ENCODE measurements at regions of chr11 and their contacts with region 1.

Region 1: GRCh38 chr11:40183073-40184064 is 1276.1 kb downstream of the LRRC4C start:
- DNase-seq: peak; percentile 78
- ATAC-seq: peak; percentile 98
- H3K4me3 ChIP-seq: no peak overlapping the region
- H3K27ac ChIP-seq: peak overlapping the region; percentile 26; the same call in 1 of the 2 replicates
- H3K4me1 ChIP-seq: no peaks in the 10 kb centered on the region; the same call in 1 of the 2 replicates
- H3K27me3 ChIP-seq: no peaks in the 10 kb centered on the region
- CTCF ChIP-seq: no peak
- EP300 ChIP-seq: peak; percentile 83 to 92; a peak in 3 of 4 replicates
- POLR2A ChIP-seq: no peak
- RAD21 ChIP-seq: no peak

Region 2: GRCh38 chr11:40168461-40168860 is 14.9 kb before region 1 on chr11:
- CTCF ChIA-PET with region 1: interaction called, 15 read pairs
- POLR2A ChIA-PET with region 1: interaction called, 4 read pairs
- RAD21 ChIA-PET with region 1: interaction called, 21 read pairs
- SMC1A ChIA-PET with region 1: interaction called, 54 read pairs
- in situ Hi-C with region 1: no loop called
- intact Hi-C with region 1: loop called (anchors 1 kb)
- DNase-seq: peak; percentile 72
- ATAC-seq: peak; percentile 97
- H3K4me3 ChIP-seq: no peak overlapping the region
- H3K27ac ChIP-seq: no peak overlapping the region
- H3K4me1 ChIP-seq: no peaks in the 10 kb centered on the region
- H3K27me3 ChIP-seq: no peaks in the 10 kb centered on the region
- CTCF ChIP-seq: no peak
- EP300 ChIP-seq: peak; percentile 73 to 92; a peak in 3 of 4 replicates
- POLR2A ChIP-seq: no peak
- RAD21 ChIP-seq: no peak

Region 3: GRCh38 chr11:40227730-40228129 is 44.4 kb after region 1 on chr11:
- CTCF ChIA-PET with region 1: interaction called, 3 read pairs
- POLR2A ChIA-PET with region 1: no interaction called
- RAD21 ChIA-PET with region 1: no interaction called
- SMC1A ChIA-PET with region 1: interaction called, 4 read pairs
- in situ Hi-C with region 1: no loop called
- intact Hi-C with region 1: loop called (anchors 2 kb)
- DNase-seq: peak; percentile 16
- ATAC-seq: peak; percentile 95
- H3K4me3 ChIP-seq: no peak overlapping the region
- H3K27ac ChIP-seq: no peak overlapping the region
- H3K4me1 ChIP-seq: no peaks in the 10 kb centered on the region
- H3K27me3 ChIP-seq: no peaks in the 10 kb centered on the region
- CTCF ChIP-seq: no peak
- EP300 ChIP-seq: no peak
- POLR2A ChIP-seq: no peak
- RAD21 ChIP-seq: no peak

Region 4: GRCh38 chr11:40241524-40242051 is 58.2 kb after region 1 on chr11:
- CTCF ChIA-PET with region 1: no interaction called
- POLR2A ChIA-PET with region 1: interaction called, 3 read pairs
- RAD21 ChIA-PET with region 1: no interaction called
- SMC1A ChIA-PET with region 1: interaction called, 3 read pairs
- in situ Hi-C with region 1: no loop called
- intact Hi-C with region 1: loop called (anchors 2 kb)
- DNase-seq: peak; percentile 74
- ATAC-seq: peak; percentile 99
- H3K4me3 ChIP-seq: no peak overlapping the region
- H3K27ac ChIP-seq: no peak overlapping the region
- H3K4me1 ChIP-seq: no peaks in the 10 kb centered on the region
- H3K27me3 ChIP-seq: no peaks in the 10 kb centered on the region
- CTCF ChIP-seq: no peak
- EP300 ChIP-seq: peak; percentile 60 to 70; a peak in 2 of 4 replicates
- POLR2A ChIP-seq: no peak
- RAD21 ChIP-seq: no peak

Region 5: DNA sequence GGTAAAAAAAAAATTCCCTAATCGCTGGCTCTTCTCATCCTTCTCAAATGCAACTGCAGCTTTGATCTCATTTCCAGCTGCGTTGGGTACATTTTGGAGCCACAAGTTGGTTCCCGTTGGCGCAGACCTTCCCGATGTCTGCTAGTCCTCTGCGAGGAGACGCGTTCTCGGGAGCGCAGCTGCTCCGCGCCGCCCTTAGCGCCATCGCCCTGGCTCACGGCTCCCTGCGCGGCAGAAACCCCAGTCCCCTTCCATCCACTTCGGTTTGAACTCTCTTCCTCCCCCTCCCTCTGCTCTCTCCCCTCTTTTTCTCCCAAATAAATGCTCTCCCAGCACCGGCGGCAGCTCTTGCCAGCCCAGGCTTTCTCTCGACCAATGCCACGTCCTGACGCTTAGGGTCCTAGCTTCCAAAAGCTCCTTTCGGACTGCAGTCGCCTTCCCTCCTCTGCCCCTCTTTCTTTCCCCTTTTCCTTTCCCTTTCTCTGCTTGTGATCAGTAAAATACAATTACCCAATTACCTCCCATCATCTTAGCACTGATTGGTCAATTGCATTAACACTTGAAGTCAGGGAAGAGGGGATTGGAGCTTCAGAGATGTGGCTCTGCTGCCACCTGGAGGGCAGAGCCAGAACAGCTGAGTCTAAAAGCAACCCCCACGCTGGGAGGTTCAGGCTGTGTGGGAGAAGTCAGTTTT is 110.4 kb after region 1 on chr11:
- CTCF ChIA-PET with region 1: interaction called, 7 read pairs
- POLR2A ChIA-PET with region 1: no interaction called
- RAD21 ChIA-PET with region 1: no interaction called
- SMC1A ChIA-PET with region 1: interaction called, 6 read pairs
- in situ Hi-C with region 1: no loop called
- intact Hi-C with region 1: loop called (anchors 5 kb)
- DNase-seq: peak; percentile 30
- ATAC-seq: peak; percentile 99
- H3K4me3 ChIP-seq: no peak overlapping the region
- H3K27ac ChIP-seq: no peak overlapping the region
- H3K4me1 ChIP-seq: no peaks in the 10 kb centered on the region
- H3K27me3 ChIP-seq: no peaks in the 10 kb centered on the region; a peak in 1 of 4 replicates
- CTCF ChIP-seq: peak; percentile 78 to 92 (median 88); a peak in 5 of 6 replicates
- EP300 ChIP-seq: no peak
- POLR2A ChIP-seq: no peak
- RAD21 ChIP-seq: peak; percentile 73